ENCODE measurements at regions of chr12 and their contacts with region 1.

Region 1: DNA sequence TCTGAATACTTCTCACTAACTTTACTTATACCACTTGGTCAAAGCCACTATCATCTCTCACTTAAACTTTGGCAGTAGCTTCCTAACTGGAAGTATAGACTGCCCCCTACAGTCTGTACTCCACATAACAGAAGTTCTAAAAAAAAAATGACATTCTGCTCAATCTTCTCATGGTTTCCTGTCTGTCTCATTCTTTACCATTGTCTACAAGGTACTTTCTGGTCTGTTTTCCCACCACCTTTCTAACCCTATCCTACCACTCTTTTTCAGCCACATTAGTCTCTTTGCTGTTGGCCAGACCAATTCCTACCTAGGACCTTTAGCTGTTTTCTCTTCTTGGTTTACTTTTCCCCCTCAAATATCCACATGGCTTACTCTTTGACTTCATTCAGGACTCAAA is 14.7 kb downstream of the CPSF6 start:
- DNase-seq: peak in 3 of 14 experiments; percentile 71 to 84 (median 82)
- ATAC-seq: peak; percentile 91
- H3K4me3 ChIP-seq: no peak overlapping the region
- H3K4me3 Mint-ChIP-seq: no peak overlapping the region
- H3K27ac ChIP-seq: peak overlapping the region in 1 of 2 donors; percentile 8
- H3K27ac Mint-ChIP-seq: peak overlapping the region; percentile 19
- H3K4me1 ChIP-seq: no peaks in the 10 kb centered on the region
- H3K4me1 Mint-ChIP-seq: peaks cover 56% of the 10 kb centered on the region
- H3K27me3 ChIP-seq: no peaks in the 10 kb centered on the region
- H3K27me3 Mint-ChIP-seq: no peaks in the 10 kb centered on the region
- CTCF ChIP-seq: peak; percentile 74

Region 2: GRCh38 chr12:68267892-68268396 is 986.1 kb before region 1 on chr12:
- CTCF ChIA-PET with region 1: no interaction called
- POLR2A ChIA-PET with region 1: no interaction called
- intact Hi-C with region 1: no loop called
- DNase-seq: no peak
- ATAC-seq: no peak
- H3K4me3 ChIP-seq: no peak overlapping the region
- H3K4me3 Mint-ChIP-seq: no peak overlapping the region
- H3K27ac ChIP-seq: no peak overlapping the region
- H3K27ac Mint-ChIP-seq: no peak overlapping the region
- H3K4me1 ChIP-seq: no peaks in the 10 kb centered on the region
- H3K4me1 Mint-ChIP-seq: no peaks in the 10 kb centered on the region
- H3K27me3 ChIP-seq: no peaks in the 10 kb centered on the region
- H3K27me3 Mint-ChIP-seq: no peaks in the 10 kb centered on the region
- CTCF ChIP-seq: no peak

Region 3: GRCh38 chr12:69151254-69151764 is 102.7 kb before region 1 on chr12:
- CTCF ChIA-PET with region 1: interaction called, 45 read pairs
- POLR2A ChIA-PET with region 1: interaction called, 13 read pairs
- intact Hi-C with region 1: loop called (anchors 1 kb)
- DNase-seq: no peak
- ATAC-seq: no peak
- H3K4me3 ChIP-seq: no peak overlapping the region
- H3K4me3 Mint-ChIP-seq: no peak overlapping the region
- H3K27ac ChIP-seq: no peak overlapping the region
- H3K27ac Mint-ChIP-seq: no peak overlapping the region
- H3K4me1 ChIP-seq: peaks cover 4% of the 10 kb centered on the region
- H3K4me1 Mint-ChIP-seq: peaks cover 17% of the 10 kb centered on the region
- H3K27me3 ChIP-seq: no peaks in the 10 kb centered on the region
- H3K27me3 Mint-ChIP-seq: no peaks in the 10 kb centered on the region
- CTCF ChIP-seq: no peak

Region 4: GRCh38 chr12:69239352-69239921 is 14.6 kb before region 1 on chr12 and contains the start of gene CPSF6:
- CTCF ChIA-PET with region 1: interaction called, 12 read pairs
- POLR2A ChIA-PET with region 1: interaction called, 9 read pairs
- intact Hi-C with region 1: loop called in 1 of 2 experiments (anchors 2 kb)
- DNase-seq: peak; percentile 93 to 99 (median 96)
- ATAC-seq: peak; percentile 85
- H3K4me3 ChIP-seq: peak within 1 kb of the TSS; percentile 87
- H3K4me3 Mint-ChIP-seq: peak within 1 kb of the TSS; percentile 97
- H3K27ac ChIP-seq: peak within 1 kb of the TSS; percentile 85 to 86
- H3K27ac Mint-ChIP-seq: peak within 1 kb of the TSS; percentile 99
- H3K4me1 ChIP-seq: peaks cover 30% of the 10 kb centered on the region
- H3K4me1 Mint-ChIP-seq: peaks cover 59% of the 10 kb centered on the region
- H3K27me3 ChIP-seq: no peaks in the 10 kb centered on the region
- H3K27me3 Mint-ChIP-seq: no peaks in the 10 kb centered on the region
- CTCF ChIP-seq: no peak
- total RNA-seq, gene CPSF6: 80.9 to 86.7 TPM

Region 5: GRCh38 chr12:69321351-69321750 is 67.3 kb after region 1 on chr12:
- CTCF ChIA-PET with region 1: no interaction called
- POLR2A ChIA-PET with region 1: no interaction called
- intact Hi-C with region 1: no loop called
- DNase-seq: no peak
- ATAC-seq: no peak
- H3K4me3 ChIP-seq: no peak overlapping the region
- H3K4me3 Mint-ChIP-seq: no peak overlapping the region
- H3K27ac ChIP-seq: no peak overlapping the region
- H3K27ac Mint-ChIP-seq: no peak overlapping the region
- H3K4me1 ChIP-seq: peaks cover 3% of the 10 kb centered on the region
- H3K4me1 Mint-ChIP-seq: peaks cover 6% of the 10 kb centered on the region
- H3K27me3 ChIP-seq: no peaks in the 10 kb centered on the region
- H3K27me3 Mint-ChIP-seq: peaks cover 4% of the 10 kb centered on the region
- CTCF ChIP-seq: no peak